ENCODE measurements at regions of chr3 and their contacts with region 1.

Region 1: DNA sequence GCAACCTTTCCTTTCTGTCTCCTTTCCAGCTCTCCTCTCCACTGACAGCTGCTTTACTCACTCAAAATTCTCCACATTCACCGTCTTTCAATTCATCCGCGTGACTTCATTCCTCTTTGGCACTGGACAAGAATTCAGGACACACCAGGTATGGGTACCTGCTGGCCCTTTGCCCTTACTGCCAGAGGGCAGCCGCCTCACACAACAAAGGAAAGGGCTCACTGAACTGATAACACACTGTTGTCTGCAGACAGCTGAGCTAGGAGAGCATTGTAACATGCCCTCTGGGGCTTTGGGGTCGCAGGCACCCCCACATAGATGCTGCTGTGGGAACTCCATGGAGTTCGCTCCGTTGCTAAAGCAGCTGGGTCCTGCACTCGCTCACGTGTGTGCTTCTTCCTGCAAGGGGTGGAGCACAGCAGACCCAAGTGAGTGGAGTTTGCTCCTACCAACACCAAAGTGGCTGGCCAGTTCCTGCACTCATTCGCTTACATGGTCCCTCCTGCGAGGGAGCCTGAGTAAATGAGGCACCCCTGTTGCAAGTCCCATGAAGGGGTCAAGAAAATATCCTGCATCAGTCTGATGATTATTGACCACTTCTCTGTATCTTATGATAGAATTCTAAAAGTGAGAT is 79.0 kb upstream of the SGO1 start:
- DNase-seq: no peak
- ATAC-seq: no peak
- H3K4me3 ChIP-seq: no peak overlapping the region
- H3K4me3 Mint-ChIP-seq: no peak overlapping the region
- H3K27ac ChIP-seq: no peak overlapping the region
- H3K27ac Mint-ChIP-seq: no peak overlapping the region
- H3K4me1 ChIP-seq: no peaks in the 10 kb centered on the region
- H3K4me1 Mint-ChIP-seq: no peaks in the 10 kb centered on the region
- H3K27me3 ChIP-seq: no peaks in the 10 kb centered on the region
- H3K27me3 Mint-ChIP-seq: no peaks in the 10 kb centered on the region

Region 2: DNA sequence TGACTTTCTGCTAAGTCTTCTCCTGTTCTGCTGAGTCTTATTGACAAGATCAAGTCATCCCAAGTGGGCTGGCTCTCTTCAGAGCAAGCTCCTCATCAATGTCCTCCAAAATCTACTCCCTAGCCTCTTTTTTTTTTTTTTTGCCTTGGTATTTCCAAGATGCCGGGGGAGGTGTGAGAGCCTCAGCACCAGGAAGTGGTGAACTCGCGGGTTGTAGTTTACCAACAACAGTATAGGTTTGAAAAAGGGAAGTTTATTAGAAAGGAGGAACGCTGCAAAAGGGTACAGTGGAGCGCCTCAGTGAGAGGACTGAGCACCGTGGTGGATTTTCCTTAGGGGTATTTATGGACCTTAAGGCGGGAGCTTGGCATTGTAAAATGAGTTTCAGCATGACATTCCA is 15.2 kb after region 1 on chr3:
- CTCF ChIA-PET with region 1: no interaction called
- POLR2A ChIA-PET with region 1: no interaction called
- intact Hi-C with region 1: loop called in 1 of 2 experiments (anchors 1 kb)
- DNase-seq: no peak
- ATAC-seq: no peak
- H3K4me3 ChIP-seq: no peak overlapping the region
- H3K4me3 Mint-ChIP-seq: peak overlapping the region in 1 of 10 donors; percentile 38
- H3K27ac ChIP-seq: no peak overlapping the region
- H3K27ac Mint-ChIP-seq: peak overlapping the region in 1 of 9 donors; percentile 12
- H3K4me1 ChIP-seq: no peaks in the 10 kb centered on the region
- H3K4me1 Mint-ChIP-seq: peaks cover 0 to 11% (median 8%) of the 10 kb centered on the region in 7 donors
- H3K27me3 ChIP-seq: no peaks in the 10 kb centered on the region
- H3K27me3 Mint-ChIP-seq: peaks cover 0 to 4% (median 0%) of the 10 kb centered on the region in 5 donors

Measured in naive thymus-derived CD4-positive, alpha-beta T cell (primary cell).